ENCODE measurements at regions of chr22 and their contacts with region 1.

Region 1: DNA sequence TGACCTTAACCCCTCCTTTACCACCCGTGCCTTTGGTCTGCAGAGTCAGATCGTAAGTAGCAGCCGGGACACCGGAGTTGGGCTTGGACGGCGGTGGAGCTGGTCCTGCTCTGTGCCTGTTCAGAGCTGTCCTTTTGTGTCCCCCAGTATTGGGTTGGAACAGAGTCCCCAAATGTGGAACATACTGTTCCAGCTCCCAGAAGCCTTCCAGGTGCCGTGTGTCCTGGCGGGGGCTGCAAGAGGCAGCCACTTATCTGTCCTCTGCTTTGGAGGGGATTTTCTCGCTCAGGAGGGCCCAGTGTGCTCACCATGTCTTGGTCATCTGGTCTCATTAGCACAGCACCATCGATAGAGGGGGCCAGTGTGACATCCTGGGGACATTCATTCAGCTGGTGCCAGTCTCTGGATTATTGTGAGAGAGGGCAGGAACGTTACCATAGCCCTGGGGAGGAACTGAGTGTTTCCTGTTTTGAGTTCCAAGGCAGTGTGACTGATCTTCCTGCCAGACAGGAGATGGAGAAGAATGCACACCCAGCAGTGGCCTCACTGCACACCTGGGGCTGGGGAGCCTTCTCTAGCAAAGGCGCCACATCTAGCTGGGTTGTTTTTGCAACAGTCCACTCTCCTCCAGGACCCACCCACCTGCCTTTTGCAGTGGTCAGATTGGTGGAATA is 12.4 kb downstream of the CRELD2 start:
- DNase-seq: peak in 1 of 2 donors; percentile 74
- ATAC-seq: peak in 1 of 3 donors; percentile 36
- H3K4me3 ChIP-seq: no peak overlapping the region
- H3K4me3 Mint-ChIP-seq: no peak overlapping the region
- H3K27ac ChIP-seq: peak overlapping the region; percentile 44
- H3K27ac Mint-ChIP-seq: peak overlapping the region in 1 of 2 donors; percentile 73
- H3K4me1 ChIP-seq: peaks cover 53% of the 10 kb centered on the region
- H3K4me1 Mint-ChIP-seq: peaks cover 16 to 21% of the 10 kb centered on the region in 2 donors
- H3K27me3 ChIP-seq: no peaks in the 10 kb centered on the region
- H3K27me3 Mint-ChIP-seq: no peaks in the 10 kb centered on the region
- CTCF ChIP-seq: peak; percentile 19

Region 2: DNA sequence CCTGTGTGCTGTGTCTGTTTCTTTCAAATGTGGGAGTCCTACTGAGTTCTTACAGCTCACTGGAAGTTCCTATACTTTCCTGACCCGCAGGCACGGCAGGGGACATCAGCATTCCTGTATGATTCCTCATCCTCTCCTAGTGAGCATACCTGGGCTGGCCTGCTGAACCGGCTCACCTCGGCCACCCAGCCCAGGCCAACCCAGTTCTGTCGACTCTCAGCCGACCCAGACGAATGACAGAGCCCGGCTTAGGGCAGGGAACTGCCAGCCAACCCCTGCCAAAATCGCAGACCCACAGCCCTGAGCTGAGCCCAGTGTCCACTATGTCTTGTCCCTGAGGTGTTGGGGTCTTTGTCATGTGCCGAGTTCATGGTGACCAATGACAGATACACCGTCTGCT is 442.9 kb before region 1 on chr22:
- intact Hi-C with region 1: no loop called
- DNase-seq: no peak
- ATAC-seq: no peak
- H3K4me3 ChIP-seq: no peak overlapping the region
- H3K4me3 Mint-ChIP-seq: no peak overlapping the region
- H3K27ac ChIP-seq: no peak overlapping the region
- H3K27ac Mint-ChIP-seq: no peak overlapping the region
- H3K4me1 ChIP-seq: no peaks in the 10 kb centered on the region
- H3K4me1 Mint-ChIP-seq: peaks cover 0 to 15% of the 10 kb centered on the region in 2 donors
- H3K27me3 ChIP-seq: no peaks in the 10 kb centered on the region
- H3K27me3 Mint-ChIP-seq: no peaks in the 10 kb centered on the region
- CTCF ChIP-seq: no peak

Region 3: GRCh38 chr22:49867303-49868265 is 63.3 kb before region 1 on chr22:
- intact Hi-C with region 1: no loop called
- DNase-seq: peak in 1 of 2 donors; percentile 62
- ATAC-seq: peak; percentile 41 to 68 (median 45)
- H3K4me3 ChIP-seq: no peak overlapping the region
- H3K4me3 Mint-ChIP-seq: peak overlapping the region; percentile 69
- H3K27ac ChIP-seq: peak overlapping the region; percentile 67
- H3K27ac Mint-ChIP-seq: peak overlapping the region; percentile 84 to 86
- H3K4me1 ChIP-seq: peaks cover 48% of the 10 kb centered on the region
- H3K4me1 Mint-ChIP-seq: peaks cover 65 to 67% of the 10 kb centered on the region in 2 donors
- H3K27me3 ChIP-seq: no peaks in the 10 kb centered on the region
- H3K27me3 Mint-ChIP-seq: no peaks in the 10 kb centered on the region
- CTCF ChIP-seq: no peak

Region 4: DNA sequence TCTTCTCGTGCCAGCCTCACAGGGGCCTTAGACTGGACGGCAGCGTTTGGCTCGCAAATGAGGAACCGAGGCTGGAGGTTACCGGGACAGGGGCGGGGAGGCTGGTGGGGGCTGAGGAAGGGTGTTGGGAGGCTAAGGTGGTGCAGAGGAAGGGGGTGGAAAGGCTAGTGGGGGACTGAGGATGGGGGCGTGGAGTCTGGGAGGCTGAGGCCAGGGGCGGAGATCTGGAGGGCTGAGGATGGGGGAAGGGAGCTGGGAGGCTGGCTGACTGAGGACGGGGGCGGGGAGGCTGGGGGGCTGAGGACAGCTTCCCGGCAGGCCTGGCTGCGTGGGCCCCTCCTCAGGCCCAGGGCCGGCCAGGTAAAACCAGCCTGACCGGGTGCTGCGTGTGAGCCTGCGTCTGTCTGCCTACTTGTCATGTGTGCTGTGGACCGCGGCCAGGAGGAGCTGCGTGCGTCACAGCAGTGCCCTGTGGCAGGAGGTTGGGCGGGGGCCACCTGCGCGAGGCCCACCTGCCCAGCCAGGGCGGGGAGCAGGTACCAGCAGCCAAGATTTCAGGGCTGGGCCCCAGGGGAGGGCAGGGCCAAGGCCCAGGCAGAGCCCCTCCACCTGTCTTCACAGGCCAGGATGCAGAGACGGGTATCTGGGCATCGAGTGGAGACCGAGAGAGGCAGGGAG is 20.3 kb after region 1 on chr22:
- intact Hi-C with region 1: no loop called
- DNase-seq: no peak
- ATAC-seq: no peak
- H3K4me3 ChIP-seq: no peak overlapping the region
- H3K4me3 Mint-ChIP-seq: no peak overlapping the region
- H3K27ac ChIP-seq: no peak overlapping the region
- H3K27ac Mint-ChIP-seq: no peak overlapping the region
- H3K4me1 ChIP-seq: peaks cover 12% of the 10 kb centered on the region
- H3K4me1 Mint-ChIP-seq: no peaks in the 10 kb centered on the region
- H3K27me3 ChIP-seq: no peaks in the 10 kb centered on the region
- H3K27me3 Mint-ChIP-seq: no peaks in the 10 kb centered on the region
- CTCF ChIP-seq: no peak

Region 5: DNA sequence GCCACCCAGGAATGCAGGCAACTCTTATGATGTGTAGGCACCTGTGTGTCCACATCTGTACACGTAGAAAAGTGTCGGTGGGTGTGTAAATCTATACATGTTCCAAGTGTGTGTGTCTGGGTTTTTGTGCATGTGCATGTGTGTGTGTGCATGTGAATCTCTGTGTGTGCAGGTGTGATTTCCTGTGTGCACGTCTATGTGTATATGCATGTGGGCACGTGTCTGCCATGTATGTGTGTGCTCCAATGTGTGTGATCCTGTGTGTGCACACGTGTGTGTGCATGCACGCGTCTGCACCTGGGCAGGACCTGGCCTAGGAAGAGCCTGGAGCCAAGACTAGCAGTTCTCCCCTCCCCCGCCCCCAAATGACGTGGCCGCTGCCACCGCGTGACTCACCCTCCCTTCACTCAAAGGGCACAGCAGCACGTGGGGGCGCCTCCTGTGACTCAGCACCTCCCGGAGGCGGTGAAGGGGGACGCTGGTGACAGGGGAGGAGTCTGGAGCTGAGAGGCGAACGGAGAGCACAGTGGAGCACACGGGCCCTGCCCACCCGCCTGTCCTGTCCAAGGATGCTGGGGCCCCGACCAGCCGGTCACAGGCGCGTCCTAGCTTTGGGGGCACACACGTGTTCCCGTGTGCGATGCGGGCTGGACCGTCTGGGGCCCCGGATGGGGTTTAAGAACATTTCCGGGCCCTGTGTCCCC is 39.8 kb after region 1 on chr22:
- intact Hi-C with region 1: loop called (anchors 5 kb)
- DNase-seq: peak; percentile 89 to 97
- ATAC-seq: peak; percentile 86 to 94 (median 89)
- H3K4me3 ChIP-seq: peak overlapping the region; percentile 52
- H3K4me3 Mint-ChIP-seq: peak overlapping the region; percentile 76
- H3K27ac ChIP-seq: peak overlapping the region; percentile 74
- H3K27ac Mint-ChIP-seq: peak overlapping the region; percentile 76 to 95
- H3K4me1 ChIP-seq: peaks cover 50% of the 10 kb centered on the region
- H3K4me1 Mint-ChIP-seq: peaks cover 9 to 28% of the 10 kb centered on the region in 2 donors
- H3K27me3 ChIP-seq: no peaks in the 10 kb centered on the region
- H3K27me3 Mint-ChIP-seq: peaks cover 0 to 3% of the 10 kb centered on the region in 2 donors
- CTCF ChIP-seq: no peak

Region 6: DNA sequence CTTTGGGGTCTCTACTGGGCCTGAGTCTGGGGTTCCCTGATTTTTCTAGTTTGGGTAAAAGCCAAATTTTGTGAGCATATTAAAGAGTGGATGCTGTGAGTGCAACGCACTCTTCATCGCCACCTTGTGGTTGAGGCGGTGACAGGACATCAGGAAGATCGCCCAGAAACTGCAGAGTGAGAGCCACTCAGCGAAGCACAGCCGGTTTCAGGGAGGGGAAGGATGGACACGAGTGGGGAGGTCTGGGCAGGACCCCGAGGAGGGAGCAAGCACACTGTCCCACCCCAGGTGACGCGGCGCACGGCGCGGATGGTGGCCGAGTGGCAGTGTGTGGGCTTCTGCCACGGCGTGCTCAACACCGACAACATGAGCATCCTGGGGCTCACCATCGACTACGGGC is 279.0 kb after region 1 on chr22:
- intact Hi-C with region 1: loop called (anchors 2 kb)
- DNase-seq: peak; percentile 72 to 90
- ATAC-seq: peak; percentile 80 to 94 (median 83)
- H3K4me3 ChIP-seq: no peak overlapping the region
- H3K4me3 Mint-ChIP-seq: no peak overlapping the region
- H3K27ac ChIP-seq: no peak overlapping the region
- H3K27ac Mint-ChIP-seq: peak overlapping the region; percentile 38 to 70
- H3K4me1 ChIP-seq: peaks cover 16% of the 10 kb centered on the region
- H3K4me1 Mint-ChIP-seq: peaks cover 14% of the 10 kb centered on the region in 2 donors
- H3K27me3 ChIP-seq: no peaks in the 10 kb centered on the region
- H3K27me3 Mint-ChIP-seq: no peaks in the 10 kb centered on the region
- CTCF ChIP-seq: peak; percentile 73

Measured in natural killer cell (primary cell).